Posterior vena cava (tissue), 2 donors: ENCODE measurements at regions of chr6 and their contacts with region 1.

Region 1: DNA sequence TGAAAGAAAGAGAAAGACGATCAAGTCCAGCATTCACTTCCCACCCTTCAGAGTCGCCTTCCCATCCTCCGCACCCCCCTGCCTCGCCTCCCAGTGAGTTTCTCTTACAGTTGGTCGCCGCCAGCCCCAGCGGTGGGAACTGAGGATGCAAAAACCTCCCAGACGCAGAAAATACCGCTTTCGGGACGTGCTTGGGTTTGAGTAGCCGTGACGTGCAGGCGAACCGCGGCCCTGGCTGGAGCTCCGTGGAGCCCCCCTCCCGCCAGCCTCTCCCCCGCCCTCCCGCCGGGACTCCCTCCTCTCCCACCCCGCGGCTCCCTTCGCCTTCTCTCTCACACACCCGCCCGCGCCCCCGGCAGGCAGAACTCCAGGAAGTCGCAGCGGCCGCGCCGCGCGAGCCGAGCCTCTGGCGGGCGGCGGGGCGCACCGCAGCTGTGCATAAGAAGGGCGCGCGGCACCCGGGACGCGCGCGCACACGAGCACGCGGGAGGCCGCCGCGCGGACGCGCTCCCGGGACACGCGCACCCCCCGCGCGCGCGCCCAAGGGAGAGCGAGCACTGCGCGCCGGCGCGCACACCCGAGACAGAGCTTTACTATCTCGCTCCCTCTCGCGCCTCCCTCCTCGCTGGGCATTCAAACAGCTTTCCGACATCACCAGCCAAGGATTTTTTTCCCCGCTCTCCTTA is at the start of gene ADGRB3:
- DNase-seq: peak; percentile 90
- total RNA-seq, gene ADGRB3: 2.0 to 5.9 TPM

Region 2: GRCh38 chr6:68778356-68779020 is 143.6 kb after region 1 on chr6:
- intact Hi-C with region 1: loop called in 1 of 2 experiments (anchors 5 kb)
- DNase-seq: no peak

Region 3: GRCh38 chr6:68958327-68958726 is 323.5 kb after region 1 on chr6:
- intact Hi-C with region 1: loop called in 1 of 2 experiments (anchors 10 kb)
- DNase-seq: no peak